ENCODE measurements at regions of chr12 and their contacts with region 1.

Region 1: GRCh38 chr12:31629756-31630732 is 29.4 kb upstream of the ETFBKMT start:
- DNase-seq: no peak
- ATAC-seq: peak; percentile 70

Region 2: GRCh38 chr12:30155001-30155730 is 1474.9 kb before region 1 on chr12:
- intact Hi-C with region 1: no loop called
- DNase-seq: no peak
- ATAC-seq: no peak

Region 3: DNA sequence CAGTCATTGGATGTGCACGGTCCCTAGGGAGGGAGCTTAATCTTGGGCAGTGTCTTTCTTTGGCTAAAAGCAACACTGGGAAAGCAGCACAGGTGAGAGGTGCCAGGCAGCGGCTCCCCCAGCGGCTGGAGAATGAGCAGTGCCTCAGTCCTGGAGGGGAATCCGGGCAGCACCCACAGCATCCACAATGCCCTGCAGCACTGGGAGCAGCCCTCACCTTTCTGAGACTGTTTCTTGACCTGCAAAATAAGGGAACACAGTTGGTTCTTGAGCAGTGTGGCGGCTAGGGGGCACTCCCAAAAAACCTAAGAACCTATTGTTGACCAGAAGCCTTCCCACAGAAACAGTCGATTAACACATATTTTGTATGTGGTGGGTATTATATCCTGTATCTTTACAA is 379.9 kb before region 1 on chr12:
- intact Hi-C with region 1: loop called (anchors 10 kb)
- DNase-seq: no peak
- ATAC-seq: no peak

Region 4: GRCh38 chr12:31353750-31354708 is 276.0 kb before region 1 on chr12:
- intact Hi-C with region 1: no loop called
- DNase-seq: no peak
- ATAC-seq: peak; percentile 65

Region 5: GRCh38 chr12:31406345-31406744 is 223.7 kb before region 1 on chr12:
- intact Hi-C with region 1: loop called (anchors 2 kb)
- DNase-seq: no peak
- ATAC-seq: no peak

Region 6: GRCh38 chr12:31756977-31757420 is 127.0 kb after region 1 on chr12:
- intact Hi-C with region 1: no loop called
- DNase-seq: no peak
- ATAC-seq: no peak

Measured in sciatic nerve (tissue), 2 donors.